Posterior vena cava (tissue), 2 donors: ENCODE measurements at regions of chr5 and their contacts with region 1.

Region 1: DNA sequence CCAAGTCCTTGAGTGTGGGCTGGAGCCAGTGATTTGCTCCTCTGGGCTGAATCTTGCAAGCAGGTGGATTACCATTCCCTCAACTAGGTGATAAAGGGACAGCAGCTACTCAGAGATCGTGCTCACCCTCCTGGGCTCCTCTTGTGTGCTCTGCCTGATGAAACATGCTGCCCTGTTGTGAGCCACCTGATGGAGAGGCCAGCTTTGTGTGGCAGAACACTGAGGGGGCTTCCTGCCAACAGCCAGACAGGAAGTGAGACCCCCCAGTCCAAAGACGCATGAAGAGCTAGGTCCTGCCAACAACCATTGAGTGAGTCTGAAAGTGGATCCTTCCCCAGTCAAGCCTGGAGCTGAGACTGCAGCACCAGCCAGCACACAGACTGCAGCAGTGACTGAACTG is 106.4 kb upstream of the IRX2 start:
- DNase-seq: no peak

Region 2: DNA sequence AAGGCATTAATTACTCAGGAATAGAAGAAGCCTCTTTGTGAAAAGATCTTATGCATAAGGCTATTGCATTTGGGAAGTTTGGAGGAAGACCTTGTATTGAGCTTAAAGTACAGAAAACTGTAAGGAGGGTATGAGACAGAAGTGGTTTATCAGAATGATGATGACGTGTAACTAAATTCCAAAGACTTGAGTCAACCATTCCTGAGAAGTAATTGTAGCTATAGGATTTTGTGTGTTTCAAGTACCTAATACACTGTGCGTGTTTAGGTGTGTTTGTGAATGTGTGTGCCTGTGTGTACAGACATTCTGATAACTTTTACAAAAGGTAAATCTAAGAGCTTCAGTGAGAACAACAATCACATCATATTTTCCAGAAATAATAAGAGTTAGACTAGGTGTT is 59.9 kb before region 1 on chr5:
- intact Hi-C with region 1: loop called in 1 of 2 experiments (anchors 2 kb)
- DNase-seq: no peak

Region 3: GRCh38 chr5:2817031-2817603 is 40.7 kb before region 1 on chr5:
- intact Hi-C with region 1: no loop called
- DNase-seq: no peak

Region 4: DNA sequence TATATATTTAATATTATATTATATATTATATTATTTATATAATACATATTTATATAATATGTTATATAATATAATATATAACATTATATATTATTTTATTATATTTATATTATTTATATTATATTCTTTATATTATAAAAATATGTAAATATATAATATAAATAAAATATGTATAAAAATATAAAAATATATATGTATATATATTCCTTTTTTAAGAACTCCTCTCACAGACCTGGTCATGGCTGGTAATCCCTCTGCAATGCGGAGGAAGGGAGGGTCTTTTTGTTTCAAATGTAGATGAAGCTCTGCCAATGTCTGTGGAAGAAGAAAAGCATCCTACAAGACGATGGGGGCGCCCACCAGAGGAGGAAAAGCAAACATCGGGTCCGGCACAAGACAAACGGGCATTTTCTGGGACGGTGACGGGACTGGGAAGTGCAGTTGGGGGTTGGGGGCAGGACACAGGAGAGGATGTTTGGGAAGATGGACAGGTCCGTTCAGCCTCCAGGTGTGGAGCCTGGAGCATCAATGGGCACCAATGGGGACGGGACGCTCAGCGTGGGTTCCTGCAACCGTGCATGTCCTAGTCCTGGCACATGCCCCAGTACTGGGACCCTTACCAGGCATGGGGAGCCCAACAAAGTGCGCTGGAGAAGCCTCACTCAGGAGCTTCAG is 931.8 kb after region 1 on chr5:
- intact Hi-C with region 1: loop called in 1 of 2 experiments (anchors 5 kb)
- DNase-seq: no peak

Region 5: DNA sequence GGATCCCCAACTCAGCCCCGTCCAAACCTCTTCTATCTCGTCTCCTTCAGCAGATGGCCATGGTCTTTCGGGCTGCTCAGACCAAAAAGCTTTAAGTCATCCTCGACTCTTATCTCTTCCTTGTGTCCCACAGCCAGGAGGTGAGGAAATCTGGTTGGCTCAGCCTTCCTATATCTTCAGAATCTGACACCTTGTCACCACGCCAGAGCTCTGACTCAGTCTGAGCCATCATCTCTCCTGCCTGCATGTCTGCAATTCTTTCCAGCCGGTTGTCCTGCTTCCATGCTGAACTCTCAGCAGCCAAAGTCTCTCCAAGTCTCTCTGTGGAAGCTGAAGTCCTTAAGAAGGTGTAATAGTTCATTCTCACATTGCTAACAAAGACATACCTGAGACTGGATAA is 1863.0 kb after region 1 on chr5:
- intact Hi-C with region 1: no loop called
- DNase-seq: peak; percentile 78